ENCODE measurements at regions of chr1 and their contacts with region 1.

Region 1: DNA sequence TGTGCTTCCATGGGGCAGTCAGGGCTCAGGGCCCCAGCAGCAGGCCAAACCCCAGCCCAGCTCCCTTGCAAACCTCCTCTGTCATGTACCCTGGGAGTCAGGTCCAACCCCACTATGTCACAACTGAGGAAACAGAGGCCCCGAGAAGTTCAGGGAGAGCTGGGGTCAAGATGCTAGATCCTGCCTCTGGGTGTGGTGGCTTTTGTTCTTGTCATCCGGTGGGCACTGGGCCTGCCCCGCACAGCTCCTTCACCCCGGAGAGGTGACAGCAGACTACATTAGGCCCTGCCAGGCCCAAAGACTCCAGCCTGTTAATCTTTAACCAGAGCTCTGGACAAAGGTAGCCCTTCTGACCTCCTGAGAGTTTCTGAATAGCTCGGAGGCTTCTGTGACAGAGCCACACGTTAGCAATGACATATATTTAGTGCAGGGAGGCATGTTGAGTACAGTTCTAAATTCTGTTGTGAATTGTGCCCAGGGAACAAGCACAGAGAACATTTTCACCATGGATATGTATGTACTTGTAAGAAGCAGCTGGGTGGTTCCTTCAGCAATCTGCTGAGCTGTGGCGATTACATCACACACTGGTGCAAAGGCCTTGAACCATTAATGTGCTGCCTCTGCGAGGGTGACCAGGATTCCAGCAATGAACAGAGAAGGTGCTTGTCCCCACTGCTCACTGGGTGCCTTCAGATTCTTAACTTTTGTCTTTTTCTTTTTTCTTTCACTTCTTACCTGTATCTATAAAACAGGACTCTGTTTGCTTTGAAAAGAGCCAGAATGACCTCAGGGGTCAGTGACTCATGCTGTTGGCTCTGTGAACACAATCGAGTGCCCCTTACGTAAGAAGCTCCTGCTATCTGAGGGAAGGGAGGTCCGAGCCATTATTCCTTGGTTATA is 102.8 kb downstream of the RHOU start:
- DNase-seq: peak; percentile 93
- ATAC-seq: peak; percentile 67
- H3K4me3 ChIP-seq: no peak overlapping the region
- H3K27ac ChIP-seq: peak overlapping the region; percentile 36; the same call in 1 of the 2 replicates
- H3K4me1 ChIP-seq: peaks cover 18% of the 10 kb centered on the region
- H3K27me3 ChIP-seq: peaks cover 13% of the 10 kb centered on the region
- CTCF ChIP-seq: no peak
- POLR2A ChIP-seq: no peak
- RAD21 ChIP-seq: no peak

Region 2: DNA sequence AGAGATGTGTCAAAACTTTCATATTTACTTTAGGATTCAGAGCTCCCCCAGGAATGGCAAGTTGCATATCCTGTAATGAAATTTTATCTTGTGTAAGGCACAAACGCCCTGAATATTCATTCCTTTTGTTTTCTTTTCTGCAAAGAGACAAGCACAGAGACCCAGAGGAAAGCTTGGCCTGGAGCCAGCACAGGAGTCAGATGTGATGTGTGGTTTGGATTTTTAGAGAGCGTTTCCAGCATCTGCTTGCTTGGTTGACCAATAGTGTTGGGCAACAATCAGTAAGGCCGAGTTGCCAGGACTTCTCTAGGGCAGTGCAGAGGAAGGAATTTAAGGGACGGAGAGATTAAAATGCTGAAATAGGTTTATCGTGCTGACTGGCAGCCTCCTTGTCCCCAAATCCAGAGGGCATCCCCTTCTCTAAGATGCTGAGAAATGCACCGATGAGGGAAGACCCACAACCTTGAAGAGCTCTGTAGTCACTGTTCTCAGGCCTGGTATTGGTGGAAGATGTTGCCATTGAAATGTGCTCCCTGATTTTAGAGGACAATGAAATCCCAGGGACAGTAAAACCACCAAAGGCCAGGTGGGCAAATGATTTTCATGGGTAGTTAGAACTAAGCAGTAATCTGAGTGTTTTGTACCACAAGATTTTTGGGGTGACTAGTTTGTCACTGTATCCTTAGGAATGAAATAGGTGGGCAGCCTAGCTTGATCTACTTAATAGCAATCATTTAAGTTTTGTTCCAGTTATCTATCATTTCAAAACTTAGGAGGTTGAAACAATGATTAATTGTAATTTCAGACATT is 140.7 kb before region 1 on chr1:
- CTCF ChIA-PET with region 1: no interaction called
- POLR2A ChIA-PET with region 1: interaction called, 10 read pairs
- dilution Hi-C with region 1: no loop called
- in situ Hi-C with region 1: no loop called
- intact Hi-C with region 1: no loop called
- DNase-seq: peak; percentile 31
- ATAC-seq: no peak
- H3K4me3 ChIP-seq: no peak overlapping the region
- H3K27ac ChIP-seq: no peak overlapping the region
- H3K4me1 ChIP-seq: no peaks in the 10 kb centered on the region
- H3K27me3 ChIP-seq: peaks cover 1% of the 10 kb centered on the region; the same call in 1 of the 2 replicates
- CTCF ChIP-seq: no peak
- POLR2A ChIP-seq: no peak
- RAD21 ChIP-seq: no peak

Region 3: DNA sequence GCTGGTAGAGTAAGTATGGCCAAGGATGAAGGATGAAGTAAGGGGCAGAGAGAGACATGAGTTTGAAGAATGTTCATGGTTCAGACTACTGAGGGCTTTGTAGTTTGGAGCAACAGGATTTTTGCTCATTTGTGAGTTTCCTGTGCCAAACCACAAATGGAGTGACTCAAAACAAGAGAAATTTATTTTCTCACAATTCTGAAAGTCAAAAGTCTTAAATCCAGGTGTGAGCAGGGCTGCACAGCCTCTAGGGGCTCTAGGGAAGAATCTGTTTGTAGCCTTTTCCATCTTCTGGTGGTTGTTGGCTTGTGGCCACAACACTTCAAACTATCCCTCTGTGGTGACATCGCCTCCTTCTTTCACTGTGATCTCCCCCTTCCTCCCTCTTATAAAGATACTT is 43.9 kb before region 1 on chr1:
- CTCF ChIA-PET with region 1: no interaction called
- POLR2A ChIA-PET with region 1: no interaction called
- dilution Hi-C with region 1: no loop called
- in situ Hi-C with region 1: no loop called
- intact Hi-C with region 1: no loop called
- DNase-seq: no peak
- ATAC-seq: no peak
- H3K4me3 ChIP-seq: no peak overlapping the region
- H3K27ac ChIP-seq: no peak overlapping the region
- H3K4me1 ChIP-seq: no peaks in the 10 kb centered on the region
- H3K27me3 ChIP-seq: peaks cover 6% of the 10 kb centered on the region
- CTCF ChIP-seq: no peak
- POLR2A ChIP-seq: no peak
- RAD21 ChIP-seq: no peak

Region 4: GRCh38 chr1:228927946-228928898 is 90.2 kb after region 1 on chr1:
- CTCF ChIA-PET with region 1: no interaction called
- POLR2A ChIA-PET with region 1: no interaction called
- dilution Hi-C with region 1: no loop called
- in situ Hi-C with region 1: no loop called
- intact Hi-C with region 1: no loop called
- DNase-seq: no peak
- ATAC-seq: peak; percentile 43
- H3K4me3 ChIP-seq: no peak overlapping the region
- H3K27ac ChIP-seq: no peak overlapping the region
- H3K4me1 ChIP-seq: peaks cover 7% of the 10 kb centered on the region; the same call in 1 of the 2 replicates
- H3K27me3 ChIP-seq: peaks cover 9% of the 10 kb centered on the region; the same call in 1 of the 2 replicates
- CTCF ChIP-seq: no peak
- POLR2A ChIP-seq: no peak
- RAD21 ChIP-seq: no peak